Activated CD8-positive, alpha-beta memory T cell treated with anti-CD3 and anti-CD28 coated beads, Interleukin-2, amount 10 ng/mL, durations not matched to agents 7 days and 5 days (primary cell): ENCODE measurements at regions of chr6 and their contacts with region 1.

Region 1: DNA sequence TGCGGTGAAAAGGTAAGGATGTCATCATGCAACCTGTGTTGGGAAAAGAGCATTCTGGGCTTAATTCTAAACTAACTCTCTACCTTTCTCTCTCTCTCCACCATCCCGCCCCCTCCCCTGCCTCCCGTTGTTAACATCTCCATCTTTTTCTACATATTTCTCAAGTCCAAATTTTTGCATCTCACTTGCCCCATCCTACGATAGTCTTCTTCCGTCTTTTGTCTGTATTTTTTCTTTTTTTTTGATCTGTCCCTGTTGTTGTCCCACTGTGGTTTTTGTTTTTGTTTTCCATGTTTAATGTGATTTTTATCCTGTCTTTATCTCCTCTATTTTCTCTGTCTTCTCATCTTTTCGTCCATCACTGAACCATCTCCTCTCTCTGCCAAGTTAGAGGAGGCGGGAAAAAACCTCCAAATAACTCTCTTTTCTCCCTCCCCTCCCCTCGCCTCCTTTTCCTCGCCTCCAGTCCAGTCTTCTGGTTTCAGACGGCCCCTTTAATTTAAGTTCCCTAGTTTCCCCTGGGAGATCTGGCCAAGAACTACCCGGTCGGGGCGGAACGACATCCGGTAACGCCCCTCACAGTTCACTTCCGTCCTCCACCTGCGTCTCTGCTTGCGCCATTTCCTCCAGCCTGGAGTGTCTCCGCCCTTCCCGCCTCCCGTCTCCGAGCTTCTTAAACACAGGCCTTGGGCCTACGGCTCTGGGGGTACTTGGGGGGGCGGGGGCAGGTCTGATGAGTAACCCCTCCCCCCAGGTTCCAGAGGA is at the start of gene NFKBIL1:
- DNase-seq: peak; percentile 96
- ATAC-seq: peak; percentile 90
- H3K4me3 Mint-ChIP-seq: peak within 1 kb of the TSS; percentile 83
- H3K27ac Mint-ChIP-seq: peak within 1 kb of the TSS; percentile 88
- H3K4me1 Mint-ChIP-seq: peaks cover 56% of the 10 kb centered on the region
- H3K27me3 Mint-ChIP-seq: no peaks in the 10 kb centered on the region
- total RNA-seq, gene NFKBIL1: 13.6 to 16.2 TPM

Region 2: DNA sequence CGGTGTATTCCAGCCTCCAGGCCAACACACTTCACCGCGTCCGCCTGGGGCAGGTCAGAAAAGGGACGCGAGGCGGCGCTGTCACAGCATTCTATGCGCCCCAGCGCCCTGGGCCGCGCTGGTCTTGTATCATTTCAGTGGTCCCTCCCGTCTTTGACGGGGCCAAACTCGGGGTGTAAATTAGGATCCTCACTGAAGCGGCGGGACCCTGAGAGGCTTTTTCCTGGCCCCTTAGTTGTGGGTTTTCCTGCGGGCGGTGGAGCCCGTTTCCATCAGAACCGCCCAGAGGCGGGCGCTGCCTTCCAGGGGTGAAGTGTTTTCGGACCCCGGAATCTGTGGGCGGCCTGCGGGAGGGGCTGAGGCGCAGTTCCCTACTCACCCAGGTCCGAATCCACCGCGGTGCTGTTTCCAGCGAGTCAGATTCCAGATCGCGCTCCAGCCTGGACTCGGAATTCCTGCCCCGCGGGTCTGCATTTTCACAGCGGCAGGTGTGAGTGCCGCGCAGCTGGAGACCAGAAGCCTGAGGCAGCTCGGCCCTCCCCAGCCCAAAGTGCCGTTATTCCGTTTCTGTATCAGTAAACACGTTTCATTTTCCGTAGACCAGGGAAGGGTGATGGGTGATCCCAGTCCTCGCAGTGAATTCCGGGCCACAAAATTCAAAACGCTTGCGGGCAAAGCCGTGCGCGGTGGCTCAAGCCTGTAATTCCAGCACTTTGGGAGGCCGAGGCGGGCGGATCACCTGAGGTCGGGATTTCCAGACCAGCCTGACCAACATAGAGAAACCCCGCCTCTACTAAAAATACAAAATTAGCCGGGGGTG is 53.1 kb before region 1 on chr6:
- CTCF ChIA-PET with region 1: interaction called, 88 read pairs
- DNase-seq: peak; percentile 86
- ATAC-seq: peak; percentile 54
- H3K4me3 Mint-ChIP-seq: peak overlapping the region; percentile 76
- H3K27ac Mint-ChIP-seq: peak overlapping the region; percentile 96
- H3K4me1 Mint-ChIP-seq: peaks cover 56% of the 10 kb centered on the region
- H3K27me3 Mint-ChIP-seq: no peaks in the 10 kb centered on the region

Region 3: DNA sequence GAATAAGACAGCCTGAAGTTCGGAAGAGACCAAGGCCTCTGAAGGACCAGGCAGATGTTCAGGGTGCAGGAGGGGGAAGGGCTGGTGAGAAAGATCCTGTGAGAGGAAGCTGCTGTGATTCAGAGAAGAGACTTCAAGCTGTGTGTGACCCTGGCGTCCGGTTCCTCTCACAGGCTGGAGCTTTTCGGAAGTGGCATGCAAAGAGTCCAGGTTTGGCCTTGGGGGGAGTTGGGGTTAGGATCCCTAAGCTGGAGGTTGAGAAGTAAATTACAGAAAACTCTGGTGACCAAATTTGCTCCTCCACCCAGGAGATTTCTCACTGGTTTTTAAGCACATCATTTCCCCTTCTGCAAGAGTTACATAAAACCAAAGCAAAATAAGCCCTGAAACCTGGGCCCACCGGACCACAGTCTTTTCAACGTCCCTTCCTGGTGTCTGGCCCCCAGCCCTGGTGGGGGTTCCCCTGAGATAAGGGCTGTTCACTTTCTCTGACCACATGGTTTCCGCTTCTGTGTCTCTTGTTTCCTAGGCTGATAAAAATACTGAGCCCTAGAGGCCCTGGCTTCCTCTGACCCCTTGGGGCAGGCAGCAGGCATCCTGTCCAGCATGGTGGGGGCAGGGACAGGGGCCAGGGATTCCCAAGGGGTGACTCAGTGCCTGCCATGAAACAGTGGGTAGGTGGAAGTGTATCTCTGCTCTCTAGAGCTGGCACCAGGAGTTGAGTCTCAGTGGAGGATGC is 13.0 kb after region 1 on chr6:
- CTCF ChIA-PET with region 1: interaction called, 34 read pairs
- DNase-seq: peak; percentile 79
- ATAC-seq: peak; percentile 77
- H3K4me3 Mint-ChIP-seq: peak overlapping the region; percentile 26
- H3K27ac Mint-ChIP-seq: peak overlapping the region; percentile 82
- H3K4me1 Mint-ChIP-seq: peaks cover 61% of the 10 kb centered on the region
- H3K27me3 Mint-ChIP-seq: peaks cover 33% of the 10 kb centered on the region

Region 4: GRCh38 chr6:31568537-31568961 is 21.4 kb after region 1 on chr6:
- CTCF ChIA-PET with region 1: interaction called, 102 read pairs
- DNase-seq: peak; percentile 89
- ATAC-seq: peak; percentile 68
- H3K4me3 Mint-ChIP-seq: peak overlapping the region; percentile 8
- H3K27ac Mint-ChIP-seq: peak overlapping the region; percentile 67
- H3K4me1 Mint-ChIP-seq: peaks cover 63% of the 10 kb centered on the region
- H3K27me3 Mint-ChIP-seq: peaks cover 49% of the 10 kb centered on the region

Region 5: GRCh38 chr6:31575335-31575901 is 28.3 kb after region 1 on chr6 and contains the start of gene TNF:
- CTCF ChIA-PET with region 1: interaction called, 952 read pairs
- DNase-seq: peak; percentile 88
- ATAC-seq: peak; percentile 32
- H3K4me3 Mint-ChIP-seq: peak within 1 kb of the TSS; percentile 99
- H3K27ac Mint-ChIP-seq: peak within 1 kb of the TSS; percentile 92
- H3K4me1 Mint-ChIP-seq: peaks cover 87% of the 10 kb centered on the region
- H3K27me3 Mint-ChIP-seq: no peaks in the 10 kb centered on the region
- total RNA-seq, gene TNF: 58.8 to 65.1 TPM